ENCODE measurements at regions of chr19 and their contacts with region 1.

Region 1: GRCh38 chr19:40284501-40285352 is at the start of gene AKT2:
- DNase-seq: peak in 1 of 2 donors; percentile 29
- H3K4me3 ChIP-seq: peak within 1 kb of the TSS; percentile 56 to 95 (median 91)
- H3K27ac ChIP-seq: peak within 1 kb of the TSS; percentile 97 to 100 (median 98)
- H3K4me1 ChIP-seq: peaks cover 36 to 50% of the 10 kb centered on the region in 2 donors
- H3K27me3 ChIP-seq: no peaks in the 10 kb centered on the region
- CTCF ChIP-seq: peak in 1 of 6 experiments; percentile 5
- POLR2A ChIP-seq: peak in 1 of 2 donors; percentile 37
- total RNA-seq, gene AKT2: 166 to 285 (median 190) TPM

Region 2: DNA sequence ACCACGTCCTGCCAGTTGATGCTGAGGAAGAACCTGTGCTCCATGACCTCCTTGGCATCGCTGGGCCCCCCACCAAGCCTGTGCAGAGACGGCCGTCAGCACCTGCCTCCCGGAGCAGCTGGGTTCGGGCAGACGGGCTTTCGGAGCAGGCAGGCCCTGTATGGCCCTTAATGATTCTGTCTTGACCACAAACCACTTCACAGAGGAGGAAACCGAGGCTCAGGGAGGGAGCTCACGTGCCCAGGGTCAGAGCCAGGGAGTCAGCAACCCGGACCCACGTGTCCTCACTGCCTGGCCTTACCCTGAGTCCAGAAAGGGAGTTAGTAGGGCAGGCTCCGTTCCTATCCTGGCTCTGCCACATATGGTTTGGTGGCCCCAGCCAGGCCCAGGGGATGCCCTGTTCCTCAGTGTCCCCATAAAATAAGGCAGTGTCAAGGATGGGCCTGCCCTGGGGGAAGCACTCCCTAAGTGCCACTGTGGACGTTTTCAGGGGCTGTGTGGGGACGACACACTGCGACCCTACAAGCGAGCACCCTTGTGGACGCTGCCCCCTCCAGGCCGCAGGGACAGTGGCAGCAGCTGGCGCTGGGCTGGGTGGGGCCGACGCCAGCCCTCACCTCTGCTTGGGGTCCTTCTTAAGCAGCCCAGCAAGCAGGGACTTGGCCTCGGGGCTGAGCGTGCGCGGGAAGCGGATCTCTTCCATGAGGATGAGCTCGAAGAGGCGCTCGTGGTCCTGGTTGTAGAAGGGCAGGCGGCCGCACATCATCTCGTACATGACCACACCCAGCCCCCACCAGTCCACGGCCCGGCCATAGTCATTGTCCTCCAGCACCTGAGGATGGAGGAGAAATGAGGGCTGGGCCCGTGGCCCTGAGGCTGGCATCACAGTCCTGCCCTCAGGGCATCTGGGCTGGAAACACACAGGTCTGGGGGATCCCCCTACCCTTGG is 49.2 kb before region 1 on chr19:
- intact Hi-C with region 1: loop called (anchors 5 kb)
- DNase-seq: no peak
- H3K4me3 ChIP-seq: no peak overlapping the region
- H3K27ac ChIP-seq: no peak overlapping the region
- H3K4me1 ChIP-seq: peaks cover 0 to 15% of the 10 kb centered on the region in 2 donors
- H3K27me3 ChIP-seq: no peaks in the 10 kb centered on the region
- CTCF ChIP-seq: no peak
- POLR2A ChIP-seq: no peak